Adrenal gland (tissue), 19 donors: ENCODE measurements at regions of chr10 and their contacts with region 1.

Region 1: GRCh38 chr10:63720072-63720537 is 198.9 kb downstream of the REEP3 start:
- DNase-seq: peak in 3 of 7 donors; percentile 35 to 73 (median 54)
- H3K4me3 ChIP-seq: no peak overlapping the region
- H3K27ac ChIP-seq: no peak overlapping the region
- H3K4me1 ChIP-seq: no peaks in the 10 kb centered on the region
- H3K27me3 ChIP-seq: no peaks in the 10 kb centered on the region
- CTCF ChIP-seq: peak; percentile 85 to 99 (median 95)
- POLR2A ChIP-seq: no peak

Region 2: DNA sequence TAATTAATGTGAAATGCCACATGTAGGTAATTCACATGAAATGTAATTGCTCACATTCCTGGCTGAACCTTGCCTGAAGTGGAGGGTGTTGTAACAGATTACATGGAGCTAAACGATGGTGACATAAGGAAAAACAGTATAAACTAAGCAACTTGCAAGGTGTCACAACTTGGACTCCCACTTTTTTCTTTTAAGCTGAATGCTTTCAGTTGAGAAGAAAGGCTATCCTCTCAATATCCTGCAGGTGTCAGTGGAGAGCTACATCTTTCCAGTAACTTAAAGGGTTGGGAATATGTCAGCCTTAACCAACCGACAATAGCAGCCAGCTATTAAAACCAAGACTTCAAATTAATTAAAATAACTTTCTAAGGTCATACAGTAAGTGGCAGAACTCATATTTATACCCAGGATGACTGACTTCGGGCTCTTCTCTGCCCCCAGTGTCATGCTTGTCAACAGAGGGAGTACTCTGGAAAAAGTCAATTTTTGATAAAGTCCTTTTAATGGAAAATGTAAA is 553.3 kb before region 1 on chr10:
- intact Hi-C with region 1: loop called in 1 of 2 experiments (anchors 10 kb)
- DNase-seq: peak in 3 of 7 donors; percentile 26 to 45 (median 34)
- H3K4me3 ChIP-seq: no peak overlapping the region
- H3K27ac ChIP-seq: no peak overlapping the region
- H3K4me1 ChIP-seq: peaks cover 0 to 8% of the 10 kb centered on the region in 2 donors
- H3K27me3 ChIP-seq: no peaks in the 10 kb centered on the region
- CTCF ChIP-seq: peak; percentile 60 to 89 (median 86)
- POLR2A ChIP-seq: no peak

Region 3: GRCh38 chr10:64142395-64142794 is 422.3 kb after region 1 on chr10:
- intact Hi-C with region 1: no loop called
- DNase-seq: no peak
- H3K4me3 ChIP-seq: no peak overlapping the region
- H3K27ac ChIP-seq: no peak overlapping the region
- H3K4me1 ChIP-seq: no peaks in the 10 kb centered on the region
- H3K27me3 ChIP-seq: no peaks in the 10 kb centered on the region
- CTCF ChIP-seq: no peak
- POLR2A ChIP-seq: no peak